CD4-positive, alpha-beta T cell (primary cell): ENCODE measurements at regions of chr10 and their contacts with region 1.

Region 1: DNA sequence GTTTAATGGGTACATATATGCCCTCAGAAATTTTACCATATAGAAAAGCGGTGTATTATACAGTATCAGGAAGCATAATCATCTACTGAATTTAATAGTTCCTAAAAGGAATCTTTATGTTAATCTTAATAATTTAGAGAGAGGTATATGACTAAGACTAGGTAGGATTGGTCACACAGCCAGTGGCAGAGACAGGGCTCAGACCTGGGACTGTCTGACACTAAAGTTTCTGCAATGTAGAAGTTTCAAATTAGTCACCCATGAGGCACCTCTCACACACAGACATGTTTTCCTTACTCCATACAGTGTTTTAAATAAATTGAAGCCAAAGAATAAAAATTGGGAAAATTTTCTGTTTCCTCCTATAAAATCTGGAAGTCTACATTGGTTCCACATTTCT is 72.8 kb upstream of the ADRA2A start:
- DNase-seq: no peak
- ATAC-seq: no peak
- H3K4me3 ChIP-seq: no peak overlapping the region
- H3K4me3 Mint-ChIP-seq: no peak overlapping the region
- H3K27ac ChIP-seq: no peak overlapping the region
- H3K27ac Mint-ChIP-seq: no peak overlapping the region
- H3K4me1 ChIP-seq: no peaks in the 10 kb centered on the region
- H3K4me1 Mint-ChIP-seq: no peaks in the 10 kb centered on the region
- H3K27me3 ChIP-seq: no peaks in the 10 kb centered on the region
- H3K27me3 Mint-ChIP-seq: no peaks in the 10 kb centered on the region
- CTCF ChIP-seq: no peak

Region 2: GRCh38 chr10:110927461-110927860 is 76.6 kb before region 1 on chr10:
- CTCF ChIA-PET with region 1: no interaction called
- POLR2A ChIA-PET with region 1: no interaction called
- intact Hi-C with region 1: loop called in 1 of 2 experiments (anchors 5 kb)
- DNase-seq: no peak
- ATAC-seq: no peak
- H3K4me3 ChIP-seq: no peak overlapping the region
- H3K4me3 Mint-ChIP-seq: no peak overlapping the region
- H3K27ac ChIP-seq: no peak overlapping the region
- H3K27ac Mint-ChIP-seq: no peak overlapping the region
- H3K4me1 ChIP-seq: peaks cover 10% of the 10 kb centered on the region
- H3K4me1 Mint-ChIP-seq: peaks cover 51% of the 10 kb centered on the region
- H3K27me3 ChIP-seq: no peaks in the 10 kb centered on the region
- H3K27me3 Mint-ChIP-seq: no peaks in the 10 kb centered on the region
- CTCF ChIP-seq: no peak

Region 3: DNA sequence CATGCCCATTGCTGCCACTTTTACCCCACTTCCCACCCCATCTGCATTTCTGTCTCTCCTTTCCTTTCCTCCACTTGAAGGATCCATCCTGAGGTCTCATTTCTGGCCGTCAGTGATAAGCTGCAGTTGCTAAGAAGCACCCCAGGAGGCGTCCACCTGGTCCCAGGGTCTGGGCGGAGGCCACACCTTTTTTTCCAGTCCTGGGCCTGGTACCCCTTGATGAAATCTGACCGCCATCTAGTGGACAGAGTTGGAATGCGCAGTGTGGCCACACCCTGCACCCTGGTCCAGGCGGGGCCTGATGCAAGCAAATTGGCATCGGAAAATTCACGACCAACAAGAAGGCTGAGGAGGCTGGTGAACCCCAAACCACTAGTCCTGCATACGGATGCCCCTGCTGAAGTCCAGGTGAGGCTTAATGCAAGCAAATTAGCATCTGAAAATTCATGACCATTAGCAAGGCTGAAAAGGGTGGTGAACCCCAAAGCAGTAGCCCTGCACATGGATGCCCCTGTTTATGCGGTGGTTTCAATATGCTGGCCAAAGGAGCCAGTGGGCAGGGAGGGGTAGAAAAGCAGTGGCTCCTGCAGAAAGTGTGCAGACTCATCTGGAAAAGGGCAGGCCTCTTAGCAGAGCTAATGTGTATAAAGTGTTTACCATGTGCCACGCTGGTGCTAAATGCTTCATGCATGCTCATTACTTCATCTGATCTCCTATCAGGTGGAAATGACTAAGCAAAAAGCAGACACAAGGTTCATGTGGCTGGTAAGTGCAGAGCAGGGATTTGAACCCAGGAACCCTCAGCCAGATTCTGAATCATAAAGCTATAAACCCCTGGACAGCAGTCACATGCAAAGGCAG is 1136.3 kb after region 1 on chr10:
- CTCF ChIA-PET with region 1: no interaction called
- POLR2A ChIA-PET with region 1: no interaction called
- intact Hi-C with region 1: no loop called
- DNase-seq: peak; percentile 38 to 78 (median 53)
- ATAC-seq: peak; percentile 90
- H3K4me3 ChIP-seq: no peak overlapping the region
- H3K4me3 Mint-ChIP-seq: no peak overlapping the region
- H3K27ac ChIP-seq: no peak overlapping the region
- H3K27ac Mint-ChIP-seq: no peak overlapping the region
- H3K4me1 ChIP-seq: peaks cover 4% of the 10 kb centered on the region
- H3K4me1 Mint-ChIP-seq: no peaks in the 10 kb centered on the region
- H3K27me3 ChIP-seq: no peaks in the 10 kb centered on the region
- H3K27me3 Mint-ChIP-seq: no peaks in the 10 kb centered on the region
- CTCF ChIP-seq: peak; percentile 70